ENCODE measurements at regions of chr2 and their contacts with region 1.

Region 1: GRCh38 chr2:177783835-177784744 is 288.5 kb downstream of the PDE11A start:
- DNase-seq: peak; percentile 34
- H3K4me3 Mint-ChIP-seq: peak overlapping the region; percentile 36
- H3K27ac Mint-ChIP-seq: peak overlapping the region; percentile 81
- H3K4me1 Mint-ChIP-seq: peaks cover 41% of the 10 kb centered on the region
- H3K27me3 Mint-ChIP-seq: no peaks in the 10 kb centered on the region

Region 2: GRCh38 chr2:176997074-176997791 is 786.9 kb before region 1 on chr2:
- CTCF ChIA-PET with region 1: no interaction called
- POLR2A ChIA-PET with region 1: no interaction called
- intact Hi-C with region 1: loop called (anchors 1 kb)
- DNase-seq: peak; percentile 34
- H3K4me3 Mint-ChIP-seq: no peak overlapping the region
- H3K27ac Mint-ChIP-seq: peak overlapping the region; percentile 18
- H3K4me1 Mint-ChIP-seq: peaks cover 19% of the 10 kb centered on the region
- H3K27me3 Mint-ChIP-seq: no peaks in the 10 kb centered on the region

Region 3: GRCh38 chr2:177547122-177547521 is 237.0 kb before region 1 on chr2:
- CTCF ChIA-PET with region 1: no interaction called
- POLR2A ChIA-PET with region 1: no interaction called
- intact Hi-C with region 1: loop called (anchors 1 kb)
- DNase-seq: no peak
- H3K4me3 Mint-ChIP-seq: no peak overlapping the region
- H3K27ac Mint-ChIP-seq: no peak overlapping the region
- H3K4me1 Mint-ChIP-seq: peaks cover 3% of the 10 kb centered on the region
- H3K27me3 Mint-ChIP-seq: no peaks in the 10 kb centered on the region

Region 4: GRCh38 chr2:177763532-177764265 is 20.4 kb before region 1 on chr2:
- CTCF ChIA-PET with region 1: interaction called, 9 read pairs
- POLR2A ChIA-PET with region 1: no interaction called
- intact Hi-C with region 1: loop called (anchors 2 kb)
- DNase-seq: peak; percentile 83
- H3K4me3 Mint-ChIP-seq: no peak overlapping the region
- H3K27ac Mint-ChIP-seq: no peak overlapping the region
- H3K4me1 Mint-ChIP-seq: peaks cover 3% of the 10 kb centered on the region
- H3K27me3 Mint-ChIP-seq: peaks cover 11% of the 10 kb centered on the region

Region 5: GRCh38 chr2:177772529-177772928 is 11.6 kb before region 1 on chr2:
- CTCF ChIA-PET with region 1: interaction called, 11 read pairs
- POLR2A ChIA-PET with region 1: no interaction called
- intact Hi-C with region 1: loop called (anchors 2 kb)
- DNase-seq: no peak
- H3K4me3 Mint-ChIP-seq: no peak overlapping the region
- H3K27ac Mint-ChIP-seq: no peak overlapping the region
- H3K4me1 Mint-ChIP-seq: peaks cover 2% of the 10 kb centered on the region
- H3K27me3 Mint-ChIP-seq: peaks cover 1% of the 10 kb centered on the region

Region 6: DNA sequence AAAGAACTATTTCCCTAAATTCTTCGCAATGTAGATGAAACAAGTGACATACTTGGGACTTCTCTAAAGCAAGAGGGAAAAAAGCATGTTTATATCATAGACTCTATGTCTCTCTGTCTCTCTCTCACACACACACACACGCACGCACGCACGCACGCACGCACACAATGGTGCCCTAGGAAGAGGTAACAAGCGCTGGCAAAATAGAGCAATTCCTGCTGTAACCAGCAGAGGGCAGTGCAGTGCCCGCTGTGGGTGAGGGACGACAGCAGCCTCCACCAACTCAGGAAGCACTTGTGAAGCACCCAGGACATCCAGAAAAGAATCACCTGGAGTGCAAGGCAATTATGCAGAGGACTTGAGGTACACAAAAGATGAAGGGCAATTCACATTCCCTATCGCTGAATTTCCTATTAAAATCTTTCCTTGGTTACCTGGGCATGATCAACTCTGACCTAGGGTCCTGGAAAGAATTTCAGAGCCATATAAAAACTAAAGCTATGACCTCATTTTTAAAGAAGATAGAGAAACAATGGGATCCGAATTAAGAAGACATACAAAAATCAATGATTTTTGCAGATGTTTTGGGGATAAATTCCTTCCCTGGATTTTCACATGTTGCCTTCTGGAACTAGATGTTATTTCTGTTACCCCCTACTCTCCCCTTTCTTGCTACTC is 122.1 kb after region 1 on chr2:
- CTCF ChIA-PET with region 1: no interaction called
- POLR2A ChIA-PET with region 1: no interaction called
- intact Hi-C with region 1: loop called (anchors 10 kb)
- DNase-seq: peak; percentile 79
- H3K4me3 Mint-ChIP-seq: no peak overlapping the region
- H3K27ac Mint-ChIP-seq: no peak overlapping the region
- H3K4me1 Mint-ChIP-seq: no peaks in the 10 kb centered on the region
- H3K27me3 Mint-ChIP-seq: peaks cover 2% of the 10 kb centered on the region

Measured in activated CD4-positive, alpha-beta memory T cell treated with anti-CD3 and anti-CD28 coated beads for 36 hours (primary cell).